GM13977 (cell line): ENCODE measurements at regions of chr20 and their contacts with region 1.

Region 1: GRCh38 chr20:58236612-58237330 is 8.3 kb upstream of the ANKRD60 start:
- DNase-seq: peak; percentile 85
- CTCF ChIP-seq: peak; percentile 94

Region 2: DNA sequence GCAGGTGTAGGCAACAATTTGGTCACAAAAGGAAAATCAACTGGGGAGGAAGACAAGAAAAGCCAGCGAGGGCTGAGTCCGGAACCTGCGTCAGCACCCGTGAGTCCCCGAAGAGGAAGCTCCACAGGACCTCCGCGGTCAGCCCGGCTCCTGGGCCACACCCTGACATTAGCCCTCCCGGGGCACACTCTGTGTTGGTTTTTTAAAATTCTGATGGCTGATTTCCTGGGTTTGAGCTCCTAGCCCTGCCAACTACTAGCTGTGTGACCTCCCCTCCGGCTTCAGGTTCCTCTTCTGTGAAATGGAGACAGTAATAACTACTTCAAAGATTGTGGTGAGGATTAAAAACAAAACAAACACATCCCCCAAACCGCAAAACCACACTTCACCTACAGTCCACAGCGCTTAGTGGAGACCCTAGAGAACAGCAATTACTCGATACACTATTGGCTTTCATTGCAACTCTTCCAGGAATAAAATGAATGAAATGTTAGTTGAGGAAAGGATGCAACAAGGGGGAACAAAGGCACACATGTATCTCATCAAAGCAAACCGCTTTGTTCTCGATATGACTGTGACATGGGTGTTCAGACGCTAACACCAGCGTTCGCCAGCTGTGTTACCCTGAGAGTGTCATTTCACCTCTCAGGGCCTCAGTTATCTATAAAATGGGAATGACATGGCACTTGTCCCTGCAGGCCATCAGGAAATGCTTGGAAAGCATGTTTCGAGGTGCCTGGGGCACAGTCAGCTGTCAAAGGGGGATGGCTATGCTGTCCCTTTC is 617.5 kb before region 1 on chr20:
- in situ Hi-C with region 1: no loop called
- DNase-seq: peak; percentile 81
- CTCF ChIP-seq: no peak

Region 3: GRCh38 chr20:58349586-58349985 is 112.8 kb after region 1 on chr20:
- in situ Hi-C with region 1: no loop called
- DNase-seq: no peak
- CTCF ChIP-seq: no peak

Region 4: GRCh38 chr20:58436868-58437645 is 200.3 kb after region 1 on chr20:
- in situ Hi-C with region 1: no loop called
- DNase-seq: no peak
- CTCF ChIP-seq: no peak

Region 5: DNA sequence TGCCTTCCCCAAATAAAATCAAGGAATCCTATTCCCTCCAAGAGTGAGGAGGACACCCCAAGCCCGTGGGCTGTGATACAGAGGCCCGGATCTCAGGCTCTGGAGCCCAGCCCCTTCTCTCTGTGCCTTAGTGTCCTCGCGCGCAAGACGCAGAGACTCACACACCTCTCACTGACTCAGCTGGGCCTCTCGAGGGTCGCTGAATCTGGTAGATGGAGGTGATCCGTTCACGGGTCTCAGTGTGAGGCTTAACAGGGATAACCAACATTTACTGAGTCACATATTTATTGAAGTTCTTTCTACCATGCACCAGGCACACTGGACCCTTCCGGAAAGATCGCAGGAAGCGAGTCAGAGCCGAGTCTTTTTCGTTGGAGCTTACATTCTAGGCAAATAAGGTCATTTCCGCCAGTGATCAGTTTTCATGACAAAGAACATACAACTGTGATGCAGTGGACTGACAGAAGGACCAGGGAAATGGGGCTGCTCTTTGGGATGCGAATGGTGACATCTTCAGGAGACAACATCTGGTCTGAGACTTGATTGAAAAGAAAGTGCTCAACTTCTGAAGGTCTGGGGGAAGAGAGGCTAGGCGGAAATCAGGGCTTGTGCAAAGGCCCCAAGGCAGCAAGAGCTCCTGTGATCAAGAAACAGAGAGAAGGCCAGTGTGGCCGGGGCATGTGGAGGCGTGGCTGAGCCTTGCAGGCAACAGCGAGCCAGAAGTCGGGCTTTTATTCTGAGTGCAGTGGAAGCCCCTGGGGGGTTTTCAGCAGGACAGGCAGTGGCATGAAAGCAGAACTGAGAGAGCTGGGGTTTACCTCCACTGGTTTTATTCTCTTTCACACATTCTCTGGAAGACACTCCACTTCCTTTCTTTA is 221.6 kb after region 1 on chr20:
- in situ Hi-C with region 1: loop called (anchors 10 kb)
- DNase-seq: peak; percentile 84
- CTCF ChIP-seq: no peak

Region 6: GRCh38 chr20:58692594-58693226 is 455.9 kb after region 1 on chr20 and contains the start of gene NPEPL1:
- in situ Hi-C with region 1: loop called (anchors 25 kb)
- DNase-seq: peak; percentile 97
- CTCF ChIP-seq: peak; percentile 78

Region 7: DNA sequence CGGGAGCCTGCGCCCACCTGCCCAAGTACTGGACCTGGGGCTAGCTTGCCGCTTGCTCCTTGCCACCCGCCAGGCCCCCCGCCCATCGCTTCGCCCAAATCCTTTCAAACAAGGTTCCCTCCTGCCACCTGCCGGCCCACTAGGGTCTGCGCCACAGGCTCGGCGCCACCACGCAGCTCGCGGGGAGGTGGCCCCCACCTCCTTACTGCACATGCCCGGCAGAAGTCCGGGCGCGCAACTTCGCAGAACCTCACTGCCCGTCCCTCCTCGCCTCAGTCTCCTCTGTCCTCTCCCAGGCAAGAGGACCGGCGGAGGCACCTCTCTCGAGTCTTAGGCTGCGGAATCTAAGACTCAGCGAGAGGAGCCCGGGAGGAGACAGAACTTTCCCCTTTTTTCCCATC is 602.7 kb after region 1 on chr20:
- in situ Hi-C with region 1: loop called (anchors 25 kb)
- DNase-seq: peak; percentile 67
- CTCF ChIP-seq: peak; percentile 51